Sigmoid colon (tissue), 7 donors: ENCODE measurements at regions of chr7 and their contacts with region 1.

Region 1: DNA sequence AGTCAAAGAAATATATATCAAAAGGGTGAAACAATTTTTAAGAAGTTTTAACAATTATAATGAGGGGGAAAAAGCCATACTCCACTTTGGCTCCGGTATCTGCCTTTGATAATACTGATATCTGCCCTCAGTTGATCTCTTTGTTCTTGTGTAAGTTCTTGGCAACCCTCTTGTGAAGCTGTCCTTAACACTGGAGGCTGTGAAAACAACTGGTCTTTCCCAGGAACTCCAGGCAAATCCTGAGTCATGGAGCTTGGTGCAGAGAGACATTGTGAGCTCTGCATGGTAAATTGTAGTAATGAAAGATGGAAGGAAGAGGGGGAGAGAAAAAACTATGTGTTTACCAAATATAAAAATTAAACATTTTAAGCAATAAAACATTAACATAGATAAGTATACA is 11.9 kb upstream of the ERVW-1 start:
- DNase-seq: no peak
- H3K4me3 ChIP-seq: no peak overlapping the region
- H3K27ac ChIP-seq: no peak overlapping the region
- H3K4me1 ChIP-seq: no peaks in the 10 kb centered on the region
- H3K27me3 ChIP-seq: no peaks in the 10 kb centered on the region
- CTCF ChIP-seq: no peak
- EP300 ChIP-seq: no peak
- POLR2A ChIP-seq: no peak

Region 2: GRCh38 chr7:92206019-92206418 is 283.6 kb before region 1 on chr7:
- intact Hi-C with region 1: loop called (anchors 10 kb)
- DNase-seq: no peak
- H3K4me3 ChIP-seq: no peak overlapping the region
- H3K27ac ChIP-seq: no peak overlapping the region
- H3K4me1 ChIP-seq: no peaks in the 10 kb centered on the region
- H3K27me3 ChIP-seq: no peaks in the 10 kb centered on the region
- CTCF ChIP-seq: no peak
- EP300 ChIP-seq: no peak
- POLR2A ChIP-seq: no peak

Region 3: GRCh38 chr7:92375013-92375412 is 114.6 kb before region 1 on chr7:
- intact Hi-C with region 1: no loop called
- DNase-seq: no peak
- H3K4me3 ChIP-seq: no peak overlapping the region
- H3K27ac ChIP-seq: no peak overlapping the region
- H3K4me1 ChIP-seq: no peaks in the 10 kb centered on the region
- H3K27me3 ChIP-seq: no peaks in the 10 kb centered on the region
- CTCF ChIP-seq: no peak
- EP300 ChIP-seq: no peak
- POLR2A ChIP-seq: no peak